ENCODE measurements at regions of chr1 and their contacts with region 1.

Region 1: GRCh38 chr1:39816415-39817090 is 27.9 kb upstream of the BMP8B start:
- DNase-seq: peak; percentile 78
- ATAC-seq: peak; percentile 94
- H3K4me3 ChIP-seq: no peak overlapping the region
- H3K27ac ChIP-seq: no peak overlapping the region
- H3K4me1 ChIP-seq: no peaks in the 10 kb centered on the region
- H3K27me3 ChIP-seq: no peaks in the 10 kb centered on the region
- CTCF ChIP-seq: peak; percentile 88

Region 2: DNA sequence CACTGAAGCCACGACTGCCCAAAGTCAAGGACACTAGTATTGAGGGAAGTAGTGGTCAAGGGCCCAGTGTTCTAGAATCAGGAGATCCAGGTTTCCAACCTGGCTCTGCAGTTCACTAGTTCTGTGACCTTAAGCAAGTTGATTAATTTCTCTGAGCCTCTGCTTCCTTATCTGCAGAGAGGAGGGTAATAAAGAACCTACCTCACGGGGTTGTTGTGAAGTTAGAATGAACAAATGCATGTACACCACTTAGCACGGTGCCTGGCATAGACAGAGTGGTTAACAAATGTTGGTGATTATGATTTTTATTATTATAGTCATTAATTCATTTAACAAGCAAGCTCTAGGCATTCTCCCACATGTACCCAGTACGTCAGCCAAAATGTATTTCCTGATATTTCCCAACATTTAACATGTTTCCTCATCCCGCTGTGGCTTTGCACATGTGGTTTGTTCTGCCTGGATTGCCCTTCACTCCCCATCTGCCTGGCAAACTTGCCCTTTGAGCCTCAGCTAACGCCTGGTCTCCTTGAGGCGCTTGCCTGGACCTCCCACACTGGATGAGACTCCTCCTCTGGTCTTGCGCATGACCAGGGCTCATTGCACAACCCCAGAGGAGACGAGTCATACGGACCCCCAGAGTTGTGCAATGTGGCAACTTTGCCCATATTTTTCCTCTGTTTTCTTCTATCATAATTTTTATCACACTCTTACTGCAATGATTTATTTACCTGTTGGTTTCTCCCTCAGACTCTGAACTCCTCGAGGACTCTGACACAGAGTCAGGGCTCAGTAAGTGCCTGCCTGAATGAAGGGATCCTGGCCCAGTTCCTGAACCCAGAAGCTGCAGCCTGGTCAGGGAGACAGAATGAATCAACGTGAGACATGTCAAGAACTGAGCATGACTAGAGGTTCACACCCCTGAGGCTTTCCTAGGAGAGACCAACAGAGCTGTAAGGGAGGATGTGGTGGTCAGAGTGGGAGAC is 117.7 kb after region 1 on chr1:
- intact Hi-C with region 1: no loop called
- DNase-seq: peak; percentile 92
- ATAC-seq: peak; percentile 96
- H3K4me3 ChIP-seq: no peak overlapping the region
- H3K27ac ChIP-seq: peak overlapping the region; percentile 77
- H3K4me1 ChIP-seq: peaks cover 26% of the 10 kb centered on the region
- H3K27me3 ChIP-seq: no peaks in the 10 kb centered on the region
- CTCF ChIP-seq: no peak

Region 3: DNA sequence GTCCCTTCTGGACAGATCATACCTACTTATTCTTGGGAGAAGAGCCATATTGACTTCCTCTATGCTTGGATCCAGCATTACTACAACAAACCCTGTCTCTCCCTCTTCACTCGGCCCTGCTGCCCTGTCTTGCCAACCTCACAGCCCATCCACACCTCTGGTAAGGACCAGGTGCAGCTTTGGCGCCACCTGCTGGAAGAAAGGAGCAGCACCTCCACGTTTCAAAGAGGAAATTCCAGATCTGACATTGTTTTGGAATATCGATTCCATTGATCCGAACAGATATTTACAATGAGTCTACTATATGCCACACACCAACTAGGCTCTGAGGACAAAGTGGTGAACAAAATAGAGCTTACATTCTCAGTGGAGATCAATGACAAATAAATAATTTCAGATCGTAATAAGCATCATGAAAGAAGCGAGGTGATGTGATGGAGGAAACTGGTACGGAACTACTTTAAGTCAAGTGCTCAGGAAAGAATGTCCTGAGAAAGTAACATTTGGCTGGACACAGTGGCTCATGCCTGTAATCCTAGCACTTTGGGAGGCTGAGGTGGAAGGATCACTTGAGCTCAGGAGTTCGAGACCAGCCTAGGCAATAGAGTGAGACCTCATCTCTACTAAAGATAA is 157.1 kb after region 1 on chr1:
- intact Hi-C with region 1: loop called (anchors 5 kb)
- DNase-seq: peak; percentile 89
- ATAC-seq: peak; percentile 82
- H3K4me3 ChIP-seq: no peak overlapping the region
- H3K27ac ChIP-seq: no peak overlapping the region
- H3K4me1 ChIP-seq: peaks cover 3% of the 10 kb centered on the region
- H3K27me3 ChIP-seq: no peaks in the 10 kb centered on the region
- CTCF ChIP-seq: peak; percentile 97